ENCODE measurements at regions of chr19 and their contacts with region 1.

Region 1: DNA sequence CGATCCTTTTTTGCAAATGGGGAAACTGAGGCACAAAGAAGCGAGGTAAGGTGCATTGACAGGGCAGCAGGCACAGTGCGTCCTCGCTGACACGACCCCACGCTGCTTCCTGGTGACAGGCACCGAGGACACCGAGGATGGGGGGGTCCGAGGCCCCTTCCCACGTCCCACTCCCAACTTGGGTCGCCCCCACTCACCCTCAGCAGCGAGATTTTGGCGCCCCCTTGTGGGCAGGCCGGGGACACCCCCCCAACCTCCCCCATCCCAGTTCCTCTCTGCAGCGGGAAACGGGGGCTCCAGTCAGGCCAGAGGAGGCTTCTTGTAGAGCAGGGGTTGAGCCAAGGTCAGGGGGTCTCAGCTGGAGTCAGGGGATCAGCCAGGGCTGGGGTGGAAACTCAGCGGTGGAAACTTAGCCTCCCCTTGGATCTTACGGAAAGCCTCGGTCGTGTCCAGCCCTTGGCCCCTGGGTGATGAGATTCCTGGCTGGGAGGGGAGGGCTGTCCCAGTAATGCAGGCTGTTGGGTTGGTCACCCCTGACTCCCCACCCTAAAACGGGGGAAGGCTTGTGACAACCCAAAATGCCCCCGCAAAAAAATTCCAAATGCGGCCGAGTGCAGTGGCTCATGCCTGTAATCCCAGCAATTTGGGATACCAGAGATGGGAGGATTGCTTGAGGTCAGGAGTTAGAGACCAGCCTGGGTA is 8.2 kb downstream of the SMIM24 start:
- DNase-seq: peak in 2 of 5 donors; percentile 42 to 48
- ATAC-seq: peak; percentile 41 to 64 (median 58)
- H3K4me3 ChIP-seq: no peak overlapping the region
- H3K27ac ChIP-seq: no peak overlapping the region
- H3K4me1 ChIP-seq: peaks cover 0 to 27% (median 9%) of the 10 kb centered on the region in 12 donors
- H3K27me3 ChIP-seq: peaks cover 0 to 7% (median 0%) of the 10 kb centered on the region in 9 donors
- CTCF ChIP-seq: peak; percentile 73 to 94 (median 88)
- POLR2A ChIP-seq: no peak

Region 2: DNA sequence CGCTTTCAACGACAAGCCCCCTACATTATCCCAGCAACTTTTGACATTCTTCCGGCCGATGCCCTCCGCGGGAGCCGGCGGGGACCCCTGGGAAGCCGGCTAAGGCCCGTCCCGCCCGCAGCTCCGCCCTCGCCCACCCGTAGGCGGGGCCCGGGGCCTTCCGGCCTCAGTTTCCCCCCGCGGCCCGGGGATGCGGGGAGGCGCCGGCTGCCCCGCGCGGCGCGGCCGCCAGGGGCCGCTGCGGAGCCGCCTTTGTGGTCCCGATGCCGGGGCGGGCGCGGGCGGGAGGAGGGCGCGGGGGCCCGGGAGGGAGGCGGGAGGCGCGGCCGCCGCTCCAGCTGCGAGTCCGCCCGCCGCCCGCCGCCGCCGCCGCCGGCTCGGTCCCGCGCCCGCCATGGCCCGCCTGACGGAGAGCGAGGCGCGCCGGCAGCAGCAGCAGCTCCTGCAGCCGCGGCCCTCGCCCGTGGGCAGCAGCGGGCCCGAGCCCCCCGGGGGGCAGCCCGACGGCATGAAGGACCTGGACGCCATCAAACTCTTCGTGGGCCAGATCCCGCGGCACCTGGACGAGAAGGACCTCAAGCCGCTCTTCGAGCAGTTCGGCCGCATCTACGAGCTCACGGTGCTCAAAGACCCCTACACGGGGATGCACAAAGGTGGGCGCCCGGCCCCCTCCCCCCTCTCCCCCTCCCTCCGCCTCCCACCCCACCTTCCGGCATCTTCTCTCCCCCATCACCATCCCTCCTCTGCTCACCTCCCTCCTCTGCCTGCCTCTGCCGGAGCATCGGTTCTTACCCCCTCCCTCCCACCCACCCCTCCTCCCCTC is 247.5 kb before region 1 on chr19 and contains the start of gene CELF5:
- intact Hi-C with region 1: loop called in 1 of 10 experiments (anchors 10 kb)
- DNase-seq: peak in 4 of 5 donors; percentile 26 to 54 (median 51)
- ATAC-seq: peak in 2 of 4 donors; percentile 41 to 75
- H3K4me3 ChIP-seq: peak within 1 kb of the TSS in 7 of 12 donors; percentile 19 to 42 (median 28)
- H3K27ac ChIP-seq: no peak within 1 kb of the TSS
- H3K4me1 ChIP-seq: peaks cover 0 to 14% (median 0%) of the 10 kb centered on the region in 12 donors
- H3K27me3 ChIP-seq: peaks cover 21 to 75% (median 53%) of the 10 kb centered on the region in 9 donors
- CTCF ChIP-seq: peak in 10 of 12 donors; percentile 29 to 76 (median 55)
- POLR2A ChIP-seq: no peak
- total RNA-seq, gene CELF5: not detected

Region 3: GRCh38 chr19:3304871-3305423 is 167.2 kb before region 1 on chr19:
- intact Hi-C with region 1: loop called in 3 of 10 experiments (anchors 1 to 5 kb)
- DNase-seq: peak; percentile 51 to 81 (median 62)
- ATAC-seq: peak; percentile 45 to 69 (median 64)
- H3K4me3 ChIP-seq: no peak overlapping the region
- H3K27ac ChIP-seq: no peak overlapping the region
- H3K4me1 ChIP-seq: peaks cover 0 to 10% (median 1%) of the 10 kb centered on the region in 12 donors
- H3K27me3 ChIP-seq: peaks cover 0 to 59% (median 14%) of the 10 kb centered on the region in 9 donors
- CTCF ChIP-seq: peak; percentile 76 to 92 (median 89)
- POLR2A ChIP-seq: no peak

Region 4: GRCh38 chr19:3324321-3324856 is 147.7 kb before region 1 on chr19:
- intact Hi-C with region 1: loop called (anchors 1 to 5 kb)
- DNase-seq: peak in 3 of 5 donors; percentile 28 to 78 (median 44)
- ATAC-seq: peak in 3 of 4 donors; percentile 47 to 49 (median 48)
- H3K4me3 ChIP-seq: no peak overlapping the region
- H3K27ac ChIP-seq: no peak overlapping the region
- H3K4me1 ChIP-seq: no peaks in the 10 kb centered on the region
- H3K27me3 ChIP-seq: peaks cover 8 to 24% (median 17%) of the 10 kb centered on the region in 9 donors
- CTCF ChIP-seq: peak; percentile 45 to 71 (median 60)
- POLR2A ChIP-seq: no peak

Region 5: DNA sequence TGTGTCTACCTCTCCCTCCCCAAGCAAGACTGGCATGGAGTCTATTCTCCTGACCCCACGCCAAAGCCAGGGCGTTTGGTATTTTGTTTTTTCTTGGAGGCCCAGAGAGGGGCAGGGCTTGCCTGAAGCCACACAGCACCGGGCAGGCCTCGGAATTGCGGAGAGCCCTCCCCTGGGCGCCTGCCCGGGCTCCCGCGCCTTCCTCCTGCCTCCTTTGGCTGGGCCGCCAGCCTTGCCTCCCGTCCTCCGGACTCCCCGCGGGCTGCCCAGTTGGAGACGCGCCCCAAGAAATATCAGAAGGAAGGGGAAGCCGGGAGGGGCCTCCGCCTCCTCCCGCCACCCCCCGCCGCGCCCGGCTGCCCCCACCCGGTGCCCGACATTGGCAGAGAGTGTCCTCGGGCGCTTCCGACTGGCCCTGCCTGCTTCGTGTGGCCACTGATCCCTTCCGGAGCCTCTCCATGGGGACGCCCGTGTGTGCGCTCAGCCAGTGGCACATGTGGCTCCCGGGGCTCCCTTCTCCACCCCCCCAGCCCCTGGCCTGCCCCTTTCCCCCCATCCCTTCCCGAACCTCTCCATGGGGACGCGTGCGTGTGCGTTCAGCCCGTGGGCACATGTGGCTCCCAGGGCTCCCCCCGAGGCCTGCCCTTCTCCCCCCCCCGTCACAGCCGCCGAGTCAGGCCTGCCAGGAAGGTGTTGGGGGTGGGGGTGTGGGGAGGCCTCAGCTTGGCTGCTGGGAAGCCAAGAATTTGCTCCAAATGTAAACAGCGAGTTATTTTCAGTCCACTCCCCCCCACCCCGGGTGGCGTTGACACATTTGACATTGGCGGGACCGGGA is 68.4 kb before region 1 on chr19:
- intact Hi-C with region 1: no loop called
- DNase-seq: peak; percentile 91 to 96 (median 95)
- ATAC-seq: peak; percentile 75 to 83 (median 80)
- H3K4me3 ChIP-seq: peak overlapping the region in 11 of 12 donors; percentile 8 to 63 (median 47)
- H3K27ac ChIP-seq: peak overlapping the region; percentile 95 to 100 (median 100)
- H3K4me1 ChIP-seq: peaks cover 9 to 91% (median 52%) of the 10 kb centered on the region in 12 donors
- H3K27me3 ChIP-seq: no peaks in the 10 kb centered on the region
- CTCF ChIP-seq: no peak
- POLR2A ChIP-seq: no peak

Region 6: GRCh38 chr19:3434712-3435553 is 37.2 kb before region 1 on chr19:
- intact Hi-C with region 1: loop called in 5 of 10 experiments (anchors 5 kb)
- DNase-seq: peak; percentile 97 to 98 (median 97)
- ATAC-seq: peak; percentile 86 to 97 (median 96)
- H3K4me3 ChIP-seq: peak overlapping the region in 11 of 12 donors; percentile 27 to 67 (median 54)
- H3K27ac ChIP-seq: peak overlapping the region; percentile 68 to 96 (median 88)
- H3K4me1 ChIP-seq: peaks cover 4 to 40% (median 24%) of the 10 kb centered on the region in 12 donors
- H3K27me3 ChIP-seq: no peaks in the 10 kb centered on the region
- CTCF ChIP-seq: no peak
- POLR2A ChIP-seq: peak in 1 of 2 donors; percentile 47

Region 7: DNA sequence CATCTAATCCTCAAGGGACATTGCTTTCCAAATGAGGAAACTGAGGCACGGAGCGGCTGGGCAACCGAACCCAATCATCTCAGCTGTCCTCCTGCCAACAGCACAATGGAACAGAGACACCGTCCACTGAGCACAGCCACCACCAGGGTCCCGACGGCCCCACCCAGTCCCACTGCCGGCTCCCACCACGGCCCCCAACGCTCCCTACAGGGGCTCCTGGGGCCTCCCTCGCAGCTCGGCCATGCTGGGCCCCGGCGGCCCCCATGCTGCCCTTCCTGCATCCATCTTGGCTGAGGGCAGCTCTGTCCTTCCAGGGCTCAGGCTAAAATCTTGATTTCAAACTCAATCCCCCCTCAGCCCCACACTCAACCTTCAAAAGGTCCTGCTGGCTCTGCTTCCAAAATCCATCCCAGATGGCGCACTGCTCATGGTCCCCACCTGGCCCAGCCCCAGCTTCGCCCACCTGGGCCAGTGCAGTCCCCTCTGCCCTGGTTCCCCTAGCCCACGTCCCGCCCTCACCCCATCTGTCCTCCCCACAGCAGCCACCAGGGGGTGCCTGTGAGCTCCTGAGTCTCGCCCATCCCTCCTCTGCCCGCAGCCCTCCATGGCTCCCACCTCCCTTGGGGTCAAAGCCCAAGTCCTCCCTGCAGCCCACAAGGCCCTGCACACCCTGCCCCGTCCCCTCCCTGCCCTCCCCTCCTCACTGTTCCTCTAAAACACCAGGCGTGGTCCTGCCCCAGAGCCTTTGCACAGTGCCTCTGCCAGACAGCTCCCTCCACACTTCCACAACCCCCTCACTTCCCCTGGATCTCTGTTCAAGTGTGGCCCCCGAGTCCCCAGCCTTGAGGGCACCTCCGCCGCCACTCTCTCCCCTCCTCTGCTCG is 220.3 kb after region 1 on chr19:
- intact Hi-C with region 1: no loop called
- DNase-seq: no peak
- ATAC-seq: peak in 3 of 4 donors; percentile 25 to 40 (median 36)
- H3K4me3 ChIP-seq: no peak overlapping the region
- H3K27ac ChIP-seq: peak overlapping the region in 4 of 12 donors; percentile 1 to 94 (median 60)
- H3K4me1 ChIP-seq: peaks cover 0 to 28% (median 14%) of the 10 kb centered on the region in 12 donors
- H3K27me3 ChIP-seq: no peaks in the 10 kb centered on the region
- CTCF ChIP-seq: peak; percentile 24 to 57 (median 42)
- POLR2A ChIP-seq: no peak